ENCODE measurements at regions of chr21 and their contacts with region 1.

Region 1: GRCh38 chr21:37365517-37366481 is 774 bp upstream of the DYRK1A start:
- DNase-seq: peak; percentile 69 to 75
- H3K4me3 ChIP-seq: peak overlapping the region; percentile 69 to 95 (median 79)
- H3K27ac ChIP-seq: peak overlapping the region; percentile 99 to 100
- H3K4me1 ChIP-seq: peaks cover 0 to 15% of the 10 kb centered on the region in 2 donors
- H3K27me3 ChIP-seq: no peaks in the 10 kb centered on the region
- CTCF ChIP-seq: no peak
- POLR2A ChIP-seq: peak; percentile 23

Region 2: GRCh38 chr21:37267269-37268184 is 98.3 kb before region 1 on chr21 and contains the start of gene VPS26C:
- intact Hi-C with region 1: loop called (anchors 1 kb)
- DNase-seq: peak; percentile 97 to 98
- H3K4me3 ChIP-seq: peak within 1 kb of the TSS; percentile 69 to 95 (median 90)
- H3K27ac ChIP-seq: peak within 1 kb of the TSS; percentile 94 to 99
- H3K4me1 ChIP-seq: peaks cover 0 to 4% of the 10 kb centered on the region in 2 donors
- H3K27me3 ChIP-seq: no peaks in the 10 kb centered on the region
- CTCF ChIP-seq: no peak
- POLR2A ChIP-seq: peak; percentile 42
- total RNA-seq, gene VPS26C: 43.9 to 84.5 (median 60.6) TPM

Region 3: DNA sequence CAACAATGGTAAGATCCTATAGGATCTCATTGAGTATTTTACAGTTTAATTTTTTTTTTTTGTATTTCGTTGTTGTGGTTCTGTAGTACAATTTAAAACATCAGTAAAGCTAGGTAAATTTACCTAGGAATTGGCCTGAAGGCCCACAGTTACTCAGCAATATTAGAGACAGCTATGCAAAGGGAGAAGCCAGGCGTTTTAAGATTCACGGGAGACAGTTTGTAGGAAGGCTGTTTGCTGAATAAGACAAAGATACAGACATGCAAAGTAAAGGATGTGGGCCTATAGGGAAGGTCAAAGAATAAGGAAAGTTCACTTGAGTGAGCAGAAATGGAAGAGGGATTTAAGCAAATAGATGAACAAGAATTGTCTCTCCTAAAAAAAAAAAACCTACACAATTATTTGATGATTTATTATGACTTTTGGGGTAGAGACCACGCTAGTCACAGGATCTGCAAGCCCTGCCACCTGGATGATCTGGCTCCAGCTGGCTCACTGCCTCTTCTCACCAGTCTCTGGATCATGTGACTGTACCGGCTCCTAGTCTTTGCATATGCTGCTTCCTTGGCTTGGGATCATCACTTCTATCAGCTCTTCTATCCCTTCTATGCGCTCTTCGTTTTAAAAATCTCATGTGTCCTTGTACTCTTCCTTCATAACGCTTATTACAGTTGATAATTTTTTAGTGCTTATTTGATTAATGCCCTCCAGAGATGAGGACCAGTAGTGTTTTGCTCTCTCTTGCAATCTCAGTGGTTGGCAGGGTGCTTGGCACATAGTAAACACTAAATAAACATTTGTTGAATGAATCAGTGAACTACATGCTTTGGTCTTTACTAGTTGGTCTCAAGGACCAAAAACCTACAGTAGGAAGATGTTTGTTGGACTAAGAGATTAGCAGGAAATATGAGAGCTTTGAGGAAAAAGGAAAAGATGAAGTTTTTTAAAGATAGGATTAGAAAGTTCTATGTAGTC is 14.8 kb after region 1 on chr21:
- intact Hi-C with region 1: no loop called
- DNase-seq: peak in 1 of 2 donors; percentile 54
- H3K4me3 ChIP-seq: no peak overlapping the region
- H3K27ac ChIP-seq: peak overlapping the region in 1 of 2 donors; percentile 35
- H3K4me1 ChIP-seq: no peaks in the 10 kb centered on the region
- H3K27me3 ChIP-seq: no peaks in the 10 kb centered on the region
- CTCF ChIP-seq: no peak
- POLR2A ChIP-seq: no peak

Region 4: GRCh38 chr21:37412603-37413360 is 47.0 kb after region 1 on chr21:
- intact Hi-C with region 1: no loop called
- DNase-seq: no peak
- H3K4me3 ChIP-seq: no peak overlapping the region
- H3K27ac ChIP-seq: peak overlapping the region in 1 of 2 donors; percentile 69
- H3K4me1 ChIP-seq: peaks cover 0 to 9% of the 10 kb centered on the region in 2 donors
- H3K27me3 ChIP-seq: no peaks in the 10 kb centered on the region
- CTCF ChIP-seq: no peak
- POLR2A ChIP-seq: no peak

Region 5: GRCh38 chr21:38205940-38206339 is 840.1 kb after region 1 on chr21:
- intact Hi-C with region 1: no loop called
- DNase-seq: no peak
- H3K4me3 ChIP-seq: no peak overlapping the region
- H3K27ac ChIP-seq: no peak overlapping the region
- H3K4me1 ChIP-seq: no peaks in the 10 kb centered on the region
- H3K27me3 ChIP-seq: peaks cover 0 to 9% of the 10 kb centered on the region in 2 donors
- CTCF ChIP-seq: no peak
- POLR2A ChIP-seq: no peak